ENCODE measurements at regions of chr5 and their contacts with region 1.

Region 1: GRCh38 chr5:38692781-38693527 is 136.5 kb upstream of the LIFR start:
- DNase-seq: no peak

Region 2: DNA sequence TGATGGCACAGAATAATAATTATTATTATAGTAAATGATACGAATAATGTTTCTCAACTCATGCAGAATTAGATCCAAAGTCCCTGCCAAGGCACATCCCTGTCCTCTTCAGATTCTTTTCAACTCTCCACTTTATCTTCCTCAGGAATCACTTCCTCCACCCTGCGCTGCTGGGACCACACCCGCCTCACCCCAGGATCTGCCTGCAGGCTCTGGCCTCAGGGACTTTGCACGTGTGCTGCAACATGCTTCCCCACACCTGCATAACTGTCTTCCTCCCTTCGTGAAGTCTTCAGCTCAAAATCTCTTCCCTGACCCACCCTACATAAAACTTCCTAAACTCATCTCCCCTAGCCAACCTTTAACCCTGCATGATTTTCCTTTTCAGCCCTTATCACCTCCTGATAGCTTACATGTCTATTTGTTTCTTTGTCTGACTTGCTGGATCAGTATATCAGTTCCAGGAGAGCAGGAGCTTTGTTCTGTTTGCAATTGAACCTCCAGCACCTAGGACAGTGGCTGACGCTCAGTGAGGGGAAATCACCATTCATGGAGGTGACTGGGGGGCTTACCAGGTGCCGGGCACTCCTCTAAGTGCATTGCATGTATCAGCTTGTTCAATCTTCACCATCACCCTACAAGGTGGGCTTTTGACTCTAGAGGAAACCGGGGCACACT is 482.1 kb before region 1 on chr5:
- intact Hi-C with region 1: no loop called
- DNase-seq: no peak

Region 3: GRCh38 chr5:38479315-38479904 is 213.5 kb before region 1 on chr5:
- intact Hi-C with region 1: no loop called
- DNase-seq: no peak

Region 4: GRCh38 chr5:38800515-38800914 is 107.6 kb after region 1 on chr5:
- intact Hi-C with region 1: loop called (anchors 5 kb)
- DNase-seq: no peak